ENCODE measurements at regions of chr1 and their contacts with region 1.

Region 1: DNA sequence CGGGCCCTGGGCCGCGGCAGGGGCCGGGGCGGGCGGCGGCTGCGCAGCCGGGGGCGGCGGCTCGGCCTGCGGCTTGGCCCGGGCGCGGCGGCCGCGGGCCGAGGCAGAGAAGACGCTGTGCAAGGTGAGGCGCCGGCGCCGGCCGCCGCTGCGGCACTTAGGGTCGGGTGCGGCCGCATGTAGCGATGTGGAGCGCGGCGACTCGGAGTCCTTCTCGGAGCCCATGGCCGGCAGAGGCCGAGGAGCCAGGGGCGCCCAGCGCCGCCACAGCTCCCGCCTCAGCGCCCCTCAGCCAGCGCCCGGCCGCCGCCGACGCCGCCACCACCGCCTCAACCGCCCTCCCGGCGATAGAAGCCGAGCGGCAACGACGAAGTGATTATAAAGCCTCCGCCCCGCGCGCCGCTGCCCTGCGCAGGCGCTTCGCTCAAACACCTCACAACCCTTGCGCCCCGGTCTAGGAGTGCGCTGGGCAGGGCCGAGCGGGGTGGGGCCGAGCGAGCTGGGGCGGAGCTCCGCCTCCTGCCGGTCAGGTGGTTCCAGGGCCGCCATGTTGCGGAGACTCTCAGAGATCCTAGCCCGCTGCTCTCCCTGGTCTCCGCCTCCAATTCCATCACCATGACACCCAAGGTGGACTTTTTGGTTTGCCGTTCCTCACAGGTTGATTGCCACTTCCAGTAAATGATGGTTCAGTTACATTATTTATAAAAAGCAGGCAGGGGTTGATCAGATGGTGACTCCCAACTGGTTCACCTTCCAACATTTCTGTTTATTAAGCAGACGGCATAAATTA is at the start of gene RNF19B:
- DNase-seq: peak; percentile 97
- ATAC-seq: peak; percentile 97
- H3K4me3 Mint-ChIP-seq: peak within 1 kb of the TSS; percentile 69
- H3K27ac Mint-ChIP-seq: peak within 1 kb of the TSS; percentile 88
- H3K4me1 Mint-ChIP-seq: peaks cover 28% of the 10 kb centered on the region
- H3K27me3 Mint-ChIP-seq: peaks cover 40% of the 10 kb centered on the region
- CTCF ChIP-seq: no peak
- total RNA-seq, gene RNF19B: 14.8 to 21.9 TPM (median 15.4 TPM) in 3 replicates

Region 2: DNA sequence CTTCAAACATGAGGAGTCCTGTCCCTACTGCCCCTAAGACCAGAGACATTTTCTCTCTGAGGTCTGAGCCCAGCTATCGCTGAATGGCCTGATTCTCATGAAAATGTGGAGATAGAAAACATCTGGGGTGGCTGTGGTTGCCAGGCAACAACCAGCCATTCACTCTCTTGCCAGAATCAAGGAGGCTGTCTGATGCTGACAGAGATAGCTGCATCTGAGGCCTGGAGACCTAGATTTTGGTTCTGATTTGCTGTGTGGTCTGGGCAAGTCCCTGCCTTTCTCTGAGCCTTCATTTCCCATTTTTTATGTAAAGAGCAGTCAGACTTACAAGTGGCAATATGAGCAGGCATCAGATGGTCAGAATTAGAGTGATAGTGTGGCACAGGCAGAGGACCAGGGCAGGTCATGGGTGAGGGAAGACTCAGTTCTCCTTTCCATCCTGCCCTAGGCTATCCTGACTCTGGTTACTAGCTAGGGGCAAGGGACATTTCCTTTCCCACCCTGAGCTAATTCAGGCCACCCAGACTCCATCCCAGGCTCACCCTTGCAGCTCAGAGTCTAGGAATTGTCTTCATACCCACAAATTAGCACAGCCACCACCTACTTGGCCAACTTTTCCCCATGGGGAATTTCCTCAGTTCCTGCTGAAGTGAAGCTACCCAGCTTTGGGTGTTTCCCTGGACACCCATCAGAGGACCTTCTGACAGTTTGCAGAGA is 20.0 kb after region 1 on chr1:
- CTCF ChIA-PET with region 1: interaction called, 10 read pairs
- POLR2A ChIA-PET with region 1: interaction called, 8 read pairs
- DNase-seq: peak; percentile 46
- ATAC-seq: peak; percentile 71
- H3K4me3 Mint-ChIP-seq: no peak overlapping the region; the same call in 1 of the 2 replicates
- H3K27ac Mint-ChIP-seq: peak overlapping the region; percentile 66
- H3K4me1 Mint-ChIP-seq: peaks cover 57% of the 10 kb centered on the region
- H3K27me3 Mint-ChIP-seq: peaks cover 3% of the 10 kb centered on the region; the same call in 1 of the 2 replicates
- CTCF ChIP-seq: no peak

Measured in WTC11 (cell line).